MCF 10A (cell line): ENCODE measurements at regions of chr20 and their contacts with region 1.

Region 1: DNA sequence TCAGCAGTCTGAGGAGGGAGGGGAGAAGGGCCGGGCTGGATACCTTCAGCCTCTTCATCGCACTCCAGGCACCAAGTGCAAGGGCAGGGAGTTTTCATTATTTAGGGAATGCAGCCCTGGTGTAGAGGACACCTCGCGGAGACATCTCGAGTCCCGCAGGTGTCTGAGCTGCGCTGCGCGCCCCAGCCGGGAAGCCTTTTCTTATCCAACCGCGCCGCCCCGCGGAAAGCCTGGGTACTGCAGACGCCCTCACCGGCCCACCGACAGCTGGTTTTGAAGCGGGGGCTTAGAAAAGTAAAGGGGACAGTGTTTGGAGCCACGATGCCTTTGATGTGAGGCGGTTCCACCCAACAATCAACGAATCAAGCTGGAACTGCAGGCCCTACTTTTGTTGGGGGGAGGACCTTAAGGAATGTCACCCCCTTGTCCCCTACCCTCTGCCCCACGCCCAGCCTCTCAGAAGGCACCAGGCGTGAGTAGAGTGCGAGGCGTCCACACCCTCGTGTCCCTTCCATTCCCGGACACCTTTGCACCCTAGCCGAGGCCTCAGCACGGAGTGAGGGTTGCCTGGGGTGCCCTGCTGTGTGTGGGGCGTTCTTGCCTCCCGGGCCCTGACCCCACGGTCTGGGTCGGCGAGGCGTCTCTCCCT is 8.6 kb downstream of the NKX2-2 start:
- DNase-seq: peak; percentile 48
- H3K4me3 Mint-ChIP-seq: peak overlapping the region; percentile 39
- H3K27ac Mint-ChIP-seq: no peak overlapping the region
- H3K4me1 Mint-ChIP-seq: no peaks in the 10 kb centered on the region
- H3K27me3 Mint-ChIP-seq: peaks cover 14% of the 10 kb centered on the region
- CTCF ChIP-seq: peak; percentile 99

Region 2: GRCh38 chr20:20872428-20872827 is 632.9 kb before region 1 on chr20:
- CTCF ChIA-PET with region 1: interaction called, 316 read pairs
- POLR2A ChIA-PET with region 1: interaction called, 3 read pairs
- intact Hi-C with region 1: no loop called
- DNase-seq: no peak
- H3K4me3 Mint-ChIP-seq: no peak overlapping the region
- H3K27ac Mint-ChIP-seq: no peak overlapping the region
- H3K4me1 Mint-ChIP-seq: no peaks in the 10 kb centered on the region
- H3K27me3 Mint-ChIP-seq: peaks cover 52% of the 10 kb centered on the region
- CTCF ChIP-seq: no peak

Region 3: GRCh38 chr20:21228511-21228910 is 276.8 kb before region 1 on chr20:
- CTCF ChIA-PET with region 1: interaction called, 11 read pairs
- POLR2A ChIA-PET with region 1: no interaction called
- intact Hi-C with region 1: no loop called
- DNase-seq: no peak
- H3K4me3 Mint-ChIP-seq: no peak overlapping the region
- H3K27ac Mint-ChIP-seq: no peak overlapping the region
- H3K4me1 Mint-ChIP-seq: no peaks in the 10 kb centered on the region
- H3K27me3 Mint-ChIP-seq: no peaks in the 10 kb centered on the region
- CTCF ChIP-seq: no peak

Region 4: DNA sequence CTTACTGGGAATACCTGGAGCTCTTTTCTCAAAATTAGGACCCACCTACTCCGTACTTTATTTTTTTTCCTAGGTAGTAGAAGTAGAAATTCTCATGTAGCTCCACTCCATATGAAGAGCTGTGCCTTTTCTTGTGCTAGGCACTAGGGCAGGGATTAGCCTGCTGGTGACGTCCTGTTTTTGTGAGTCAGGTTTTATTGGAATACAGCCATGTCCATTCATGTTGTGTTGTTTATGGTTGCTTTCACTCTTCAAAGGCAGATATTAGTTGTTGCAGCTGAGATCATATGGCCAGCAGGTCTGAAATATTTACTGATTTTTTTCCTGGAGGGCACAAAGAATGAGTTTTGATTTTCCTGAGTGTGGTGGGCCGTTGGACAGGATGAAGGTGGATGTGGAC is 181.6 kb before region 1 on chr20:
- CTCF ChIA-PET with region 1: interaction called, 10 read pairs
- POLR2A ChIA-PET with region 1: no interaction called
- intact Hi-C with region 1: no loop called
- DNase-seq: peak; percentile 87
- H3K4me3 Mint-ChIP-seq: peak overlapping the region; percentile 53
- H3K27ac Mint-ChIP-seq: peak overlapping the region; percentile 77
- H3K4me1 Mint-ChIP-seq: peaks cover 38% of the 10 kb centered on the region
- H3K27me3 Mint-ChIP-seq: no peaks in the 10 kb centered on the region
- CTCF ChIP-seq: no peak

Region 5: GRCh38 chr20:21453680-21454079 is 51.6 kb before region 1 on chr20:
- CTCF ChIA-PET with region 1: interaction called, 11 read pairs
- POLR2A ChIA-PET with region 1: no interaction called
- intact Hi-C with region 1: no loop called
- DNase-seq: no peak
- H3K4me3 Mint-ChIP-seq: peak overlapping the region; percentile 14
- H3K27ac Mint-ChIP-seq: no peak overlapping the region
- H3K4me1 Mint-ChIP-seq: peaks cover 15% of the 10 kb centered on the region
- H3K27me3 Mint-ChIP-seq: no peaks in the 10 kb centered on the region
- CTCF ChIP-seq: no peak

Region 6: DNA sequence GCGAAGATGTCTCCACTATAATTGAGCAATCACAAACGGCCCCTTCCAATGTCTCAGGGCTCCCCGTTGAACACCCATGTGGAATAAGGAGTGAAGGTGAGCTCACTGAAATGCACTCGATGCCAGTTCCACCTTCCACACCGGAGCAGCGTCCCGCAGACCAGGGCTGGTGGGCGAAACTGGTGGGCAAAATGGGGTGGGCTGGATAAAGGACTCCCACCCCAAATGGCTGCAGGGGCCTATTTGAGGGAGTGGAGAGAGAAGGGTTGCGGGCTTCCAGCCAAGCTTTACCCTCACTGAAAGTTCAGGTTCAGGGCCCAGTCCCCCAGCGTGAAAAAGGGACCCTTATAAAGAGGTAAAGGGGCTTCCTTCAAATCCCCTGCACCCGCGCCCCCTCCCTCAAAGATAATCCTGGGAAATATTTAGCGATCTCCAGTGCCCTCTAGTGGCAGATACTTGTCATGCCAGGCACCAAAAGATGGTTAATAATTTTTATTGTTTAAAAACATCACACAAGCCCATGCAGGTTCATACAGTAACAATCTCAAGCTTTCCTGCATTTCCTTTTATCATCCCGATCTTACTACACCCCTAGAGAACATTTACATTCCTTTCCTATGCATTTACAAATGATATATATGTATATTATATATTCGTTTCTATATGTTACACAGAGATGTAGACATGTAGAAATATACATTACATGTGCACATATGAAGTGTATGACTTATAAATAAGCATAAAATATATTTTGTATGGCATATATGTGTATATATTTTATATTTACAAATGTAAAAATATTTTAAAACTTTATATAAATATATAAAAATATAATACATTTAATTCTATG is 66.8 kb after region 1 on chr20:
- CTCF ChIA-PET with region 1: interaction called, 17 read pairs
- POLR2A ChIA-PET with region 1: no interaction called
- intact Hi-C with region 1: loop called (anchors 10 kb)
- DNase-seq: peak; percentile 28
- H3K4me3 Mint-ChIP-seq: no peak overlapping the region
- H3K27ac Mint-ChIP-seq: no peak overlapping the region
- H3K4me1 Mint-ChIP-seq: no peaks in the 10 kb centered on the region
- H3K27me3 Mint-ChIP-seq: peaks cover 34% of the 10 kb centered on the region
- CTCF ChIP-seq: peak; percentile 90